KBM-7 (cell line): ENCODE measurements at regions of chr2 and their contacts with region 1.

Region 1: GRCh38 chr2:119468154-119468955 is 36.7 kb downstream of the TMEM37 start:
- DNase-seq: no peak

Region 2: GRCh38 chr2:118882709-118883210 is 585.6 kb before region 1 on chr2:
- in situ Hi-C with region 1: loop called (anchors 25 kb)
- DNase-seq: peak; percentile 67

Region 3: GRCh38 chr2:120343100-120343432 is 874.7 kb after region 1 on chr2:
- in situ Hi-C with region 1: no loop called
- DNase-seq: no peak